ENCODE measurements at regions of chr9 and their contacts with region 1.

Region 1: DNA sequence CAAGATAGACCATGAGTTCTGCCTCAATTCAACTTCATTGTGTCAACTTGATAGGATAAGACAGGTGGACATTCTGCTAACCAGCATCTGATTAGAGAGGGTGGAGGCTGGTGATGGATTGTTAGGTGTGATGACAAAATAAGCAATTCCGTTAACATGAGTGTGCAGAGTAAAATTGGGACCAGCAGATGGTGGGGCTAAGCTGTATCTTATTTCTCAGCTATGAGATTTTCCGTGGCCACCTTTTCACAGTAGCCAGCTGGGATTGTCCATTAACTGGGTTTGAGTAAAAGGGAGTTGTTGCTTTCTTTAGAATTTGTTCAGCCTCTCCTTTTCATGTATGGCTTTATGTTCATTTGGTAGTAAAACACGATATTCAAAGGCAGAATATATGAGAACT is 28.8 kb upstream of the TAL2 start:
- DNase-seq: no peak
- H3K4me3 ChIP-seq: no peak overlapping the region
- H3K27ac ChIP-seq: no peak overlapping the region
- H3K4me1 ChIP-seq: no peaks in the 10 kb centered on the region
- H3K27me3 ChIP-seq: no peaks in the 10 kb centered on the region
- CTCF ChIP-seq: no peak
- POLR2A ChIP-seq: no peak

Region 2: GRCh38 chr9:105873801-105874200 is 240.4 kb after region 1 on chr9:
- intact Hi-C with region 1: no loop called
- DNase-seq: no peak
- H3K4me3 ChIP-seq: no peak overlapping the region
- H3K27ac ChIP-seq: no peak overlapping the region
- H3K4me1 ChIP-seq: no peaks in the 10 kb centered on the region
- H3K27me3 ChIP-seq: no peaks in the 10 kb centered on the region
- CTCF ChIP-seq: no peak
- POLR2A ChIP-seq: no peak

Region 3: GRCh38 chr9:106467113-106467864 is 833.9 kb after region 1 on chr9:
- intact Hi-C with region 1: no loop called
- DNase-seq: no peak
- H3K4me3 ChIP-seq: no peak overlapping the region
- H3K27ac ChIP-seq: no peak overlapping the region
- H3K4me1 ChIP-seq: no peaks in the 10 kb centered on the region
- H3K27me3 ChIP-seq: no peaks in the 10 kb centered on the region
- CTCF ChIP-seq: no peak
- POLR2A ChIP-seq: no peak

Region 4: GRCh38 chr9:106632621-106633020 is 999.2 kb after region 1 on chr9:
- intact Hi-C with region 1: loop called (anchors 5 kb)
- DNase-seq: no peak
- H3K4me3 ChIP-seq: no peak overlapping the region
- H3K27ac ChIP-seq: no peak overlapping the region
- H3K4me1 ChIP-seq: no peaks in the 10 kb centered on the region
- H3K27me3 ChIP-seq: no peaks in the 10 kb centered on the region
- CTCF ChIP-seq: no peak
- POLR2A ChIP-seq: no peak